HCT116 (cell line): ENCODE measurements at regions of chr2 and their contacts with region 1.

Region 1: GRCh38 chr2:106205488-106205887 is 11.4 kb upstream of the UXS1 start:
- DNase-seq: no peak
- ATAC-seq: no peak
- H3K4me3 ChIP-seq: no peak overlapping the region
- H3K27ac ChIP-seq: no peak overlapping the region
- H3K4me1 ChIP-seq: no peaks in the 10 kb centered on the region
- H3K27me3 ChIP-seq: no peaks in the 10 kb centered on the region
- CTCF ChIP-seq: no peak
- POLR2A ChIP-seq: no peak
- RAD21 ChIP-seq: no peak

Region 2: GRCh38 chr2:106053116-106053515 is 152.4 kb before region 1 on chr2:
- CTCF ChIA-PET with region 1: no interaction called
- POLR2A ChIA-PET with region 1: no interaction called
- RAD21 ChIA-PET with region 1: no interaction called
- intact Hi-C with region 1: no loop called
- DNase-seq: peak; percentile 12
- ATAC-seq: peak; percentile 69
- H3K4me3 ChIP-seq: peak overlapping the region in 1 of 2 experiments; percentile 15; a peak in 1 of 4 replicates
- H3K27ac ChIP-seq: no peak overlapping the region
- H3K4me1 ChIP-seq: peaks cover 16 to 32% of the 10 kb centered on the region in 2 experiments; a peak in 3 of 4 replicates
- H3K27me3 ChIP-seq: no peaks in the 10 kb centered on the region
- CTCF ChIP-seq: no peak
- POLR2A ChIP-seq: no peak
- RAD21 ChIP-seq: no peak

Region 3: GRCh38 chr2:106232638-106233349 is 27.3 kb after region 1 on chr2:
- CTCF ChIA-PET with region 1: no interaction called
- POLR2A ChIA-PET with region 1: no interaction called
- RAD21 ChIA-PET with region 1: no interaction called
- intact Hi-C with region 1: loop called (anchors 1 kb)
- DNase-seq: no peak
- ATAC-seq: no peak
- H3K4me3 ChIP-seq: no peak overlapping the region
- H3K27ac ChIP-seq: no peak overlapping the region
- H3K4me1 ChIP-seq: no peaks in the 10 kb centered on the region
- H3K27me3 ChIP-seq: no peaks in the 10 kb centered on the region
- CTCF ChIP-seq: no peak
- POLR2A ChIP-seq: no peak
- RAD21 ChIP-seq: no peak